Right cardiac atrium (tissue), 5 donors: ENCODE measurements at regions of chr16 and their contacts with region 1.

Region 1: GRCh38 chr16:25838724-25839186 is 147.0 kb downstream of the HS3ST4 start:
- DNase-seq: no peak
- ATAC-seq: peak in 1 of 2 donors; percentile 36
- H3K4me3 ChIP-seq: no peak overlapping the region
- H3K27ac ChIP-seq: no peak overlapping the region
- H3K4me1 ChIP-seq: no peaks in the 10 kb centered on the region
- H3K27me3 ChIP-seq: no peaks in the 10 kb centered on the region

Region 2: DNA sequence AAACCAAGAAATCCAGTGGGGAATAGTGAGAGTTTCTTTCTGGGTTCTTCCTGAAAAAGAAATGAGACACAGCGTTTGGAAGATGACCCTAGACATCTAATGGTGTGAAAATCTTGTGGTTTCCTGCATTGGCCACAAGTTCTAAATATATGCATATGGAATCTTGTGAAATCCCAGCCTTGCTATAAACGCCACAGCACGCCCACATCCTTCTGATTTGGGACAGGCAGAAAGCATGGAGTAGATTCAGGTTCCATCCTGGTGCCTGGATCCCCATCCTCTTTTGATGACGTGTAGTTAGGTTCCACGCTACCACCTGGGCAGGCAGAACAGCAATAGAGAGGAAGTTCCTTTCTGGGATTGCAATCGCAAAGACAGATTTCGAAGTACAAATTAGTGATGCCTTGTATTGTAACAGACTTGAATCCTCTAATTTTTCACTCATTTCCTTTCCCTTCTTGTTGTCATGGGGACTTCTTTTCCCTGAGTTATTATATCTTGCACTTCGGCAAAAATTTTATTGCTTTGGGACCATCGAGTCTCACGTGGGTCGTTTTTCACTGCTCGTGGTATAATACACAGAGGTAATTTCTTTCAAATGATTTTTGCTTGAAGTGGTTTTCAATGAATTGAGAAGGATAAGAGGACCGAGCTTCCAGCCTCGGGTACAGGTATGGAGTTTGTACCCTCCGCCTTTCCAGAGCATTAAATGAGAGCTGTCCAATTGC is 109.4 kb before region 1 on chr16:
- intact Hi-C with region 1: no loop called
- DNase-seq: no peak
- ATAC-seq: no peak
- H3K4me3 ChIP-seq: no peak overlapping the region
- H3K27ac ChIP-seq: no peak overlapping the region
- H3K4me1 ChIP-seq: no peaks in the 10 kb centered on the region
- H3K27me3 ChIP-seq: no peaks in the 10 kb centered on the region

Region 3: GRCh38 chr16:25916037-25916436 is 77.3 kb after region 1 on chr16:
- intact Hi-C with region 1: no loop called
- DNase-seq: no peak
- ATAC-seq: no peak
- H3K4me3 ChIP-seq: no peak overlapping the region
- H3K27ac ChIP-seq: no peak overlapping the region
- H3K4me1 ChIP-seq: no peaks in the 10 kb centered on the region
- H3K27me3 ChIP-seq: no peaks in the 10 kb centered on the region

Region 4: DNA sequence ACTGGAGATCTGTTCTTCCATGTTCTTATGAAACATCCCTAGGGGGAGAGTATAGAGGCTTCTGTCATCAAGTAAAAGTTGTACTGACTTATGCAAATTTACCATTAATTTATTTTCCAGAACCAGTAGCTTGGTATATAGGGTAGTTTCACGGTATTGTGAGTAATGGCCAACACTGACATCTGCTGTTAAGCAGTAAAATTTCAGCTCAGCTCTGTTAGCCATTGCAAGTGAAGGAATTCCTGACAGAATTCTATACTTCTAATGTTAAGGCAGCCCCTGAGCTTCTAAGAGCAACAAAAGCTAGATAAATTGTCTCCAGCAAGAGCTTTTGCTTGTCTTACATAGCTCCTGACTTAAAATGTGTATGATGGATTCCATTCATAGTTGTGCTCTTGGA is 614.5 kb after region 1 on chr16:
- intact Hi-C with region 1: loop called in 1 of 4 experiments (anchors 5 kb)
- DNase-seq: no peak
- ATAC-seq: no peak
- H3K4me3 ChIP-seq: no peak overlapping the region
- H3K27ac ChIP-seq: no peak overlapping the region
- H3K4me1 ChIP-seq: no peaks in the 10 kb centered on the region
- H3K27me3 ChIP-seq: no peaks in the 10 kb centered on the region

Region 5: DNA sequence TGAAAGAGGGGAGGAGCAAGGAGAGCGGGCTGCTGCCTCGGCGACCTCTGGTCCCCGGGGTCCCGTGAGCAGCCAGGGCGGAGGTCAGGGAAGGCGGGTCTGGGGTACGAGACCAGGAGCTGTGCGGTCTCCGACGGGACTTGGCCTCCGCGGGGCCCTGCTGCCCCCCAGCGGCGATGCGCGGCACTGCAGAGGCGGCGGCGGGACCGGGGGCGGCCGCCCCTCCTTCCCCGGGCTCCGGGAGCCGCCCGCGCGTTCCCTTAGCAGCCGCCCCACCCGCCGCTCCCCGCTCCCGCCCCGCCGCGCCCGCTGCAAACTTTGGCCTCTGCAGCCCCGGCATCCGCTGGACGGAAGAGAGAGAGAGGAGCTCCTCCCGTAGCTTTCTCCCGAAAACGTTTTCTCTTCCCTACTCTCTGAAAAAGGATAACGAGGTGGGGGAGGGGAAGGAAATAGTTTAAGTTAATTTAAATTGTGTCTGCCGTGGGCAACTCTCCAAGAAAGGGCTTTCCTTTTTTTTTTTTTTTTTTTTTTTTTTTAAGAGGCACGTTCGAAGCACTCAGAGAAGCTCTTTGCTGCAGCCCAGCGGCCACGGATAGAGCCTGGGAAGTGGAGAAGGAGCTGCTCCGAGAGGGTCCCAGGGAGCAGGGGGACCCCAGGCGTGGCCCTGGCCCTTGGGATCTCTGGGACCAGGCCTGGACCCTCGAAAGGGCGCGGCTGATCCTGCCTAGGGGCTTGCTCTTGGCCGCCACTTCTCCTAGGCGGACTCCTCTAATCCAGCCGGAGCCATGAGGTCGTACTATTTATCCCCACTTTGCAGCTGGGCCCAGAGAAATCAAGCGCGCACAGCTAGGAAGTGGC is 1271.1 kb after region 1 on chr16:
- intact Hi-C with region 1: loop called in 2 of 4 experiments (anchors 10 kb)
- DNase-seq: peak; percentile 86 to 95 (median 94)
- ATAC-seq: peak; percentile 96 to 98
- H3K4me3 ChIP-seq: peak overlapping the region; percentile 16
- H3K27ac ChIP-seq: peak overlapping the region; percentile 8
- H3K4me1 ChIP-seq: no peaks in the 10 kb centered on the region
- H3K27me3 ChIP-seq: no peaks in the 10 kb centered on the region

Region 6: DNA sequence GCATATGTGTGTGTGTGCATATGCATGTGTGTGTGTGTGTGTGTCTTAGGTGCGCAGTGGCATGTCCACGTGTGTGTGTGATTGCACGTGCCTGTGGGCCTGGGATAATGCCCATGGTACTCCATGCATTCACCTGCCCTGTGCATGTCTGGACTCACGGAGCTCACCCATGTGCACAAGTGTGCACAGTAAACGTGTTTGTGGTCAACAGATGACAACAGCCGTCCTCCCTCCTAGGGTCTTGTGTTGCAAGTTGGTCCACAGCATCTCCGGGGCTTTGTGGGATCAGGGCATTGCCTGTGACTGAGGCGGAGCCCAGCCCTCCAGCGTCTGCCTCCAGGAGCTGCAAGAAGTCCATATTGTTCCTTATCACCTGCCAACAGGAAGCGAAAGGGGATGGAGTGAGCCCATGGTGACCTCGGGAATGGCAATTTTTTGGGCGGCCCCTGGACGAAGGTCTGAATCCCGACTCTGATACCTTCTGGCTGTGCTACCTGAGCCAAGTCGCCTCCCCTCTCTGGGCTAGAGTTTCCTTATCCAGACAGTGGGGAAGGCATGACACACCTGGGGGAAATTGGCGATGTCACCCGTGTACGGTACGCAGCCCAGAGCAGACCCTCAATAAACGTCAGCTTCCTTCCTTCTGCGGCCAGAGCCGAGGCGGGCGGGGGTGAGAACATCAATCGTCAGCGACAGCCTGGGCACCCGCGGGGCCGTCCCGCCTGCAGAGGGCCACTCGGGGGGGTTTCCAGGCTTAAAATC is 1610.9 kb after region 1 on chr16:
- intact Hi-C with region 1: loop called in 1 of 4 experiments (anchors 10 kb)
- DNase-seq: peak in 1 of 3 donors; percentile 39
- ATAC-seq: peak in 1 of 2 donors; percentile 28
- H3K4me3 ChIP-seq: no peak overlapping the region
- H3K27ac ChIP-seq: no peak overlapping the region
- H3K4me1 ChIP-seq: no peaks in the 10 kb centered on the region
- H3K27me3 ChIP-seq: no peaks in the 10 kb centered on the region